Caco-2 (cell line): ENCODE measurements at regions of chr17 and their contacts with region 1.

Region 1: GRCh38 chr17:34584805-34585416 is 5.5 kb downstream of the TMEM132E start:
- DNase-seq: peak in 1 of 2 experiments; percentile 22
- H3K4me3 ChIP-seq: no peak overlapping the region
- H3K4me3 Mint-ChIP-seq: no peak overlapping the region
- H3K27ac Mint-ChIP-seq: no peak overlapping the region
- H3K4me1 ChIP-seq: peaks cover 6% of the 10 kb centered on the region; the same call in 1 of the 2 replicates
- H3K4me1 Mint-ChIP-seq: peaks cover 5% of the 10 kb centered on the region
- H3K27me3 ChIP-seq: peaks cover 2% of the 10 kb centered on the region; the same call in 1 of the 2 replicates
- H3K27me3 Mint-ChIP-seq: peaks cover 33% of the 10 kb centered on the region
- CTCF ChIP-seq: peak in 1 of 2 experiments; percentile 31

Region 2: GRCh38 chr17:34542700-34543336 is 42.1 kb before region 1 on chr17:
- CTCF ChIA-PET with region 1: no interaction called
- POLR2A ChIA-PET with region 1: no interaction called
- intact Hi-C with region 1: no loop called
- DNase-seq: peak in 1 of 2 experiments; percentile 62
- H3K4me3 ChIP-seq: no peak overlapping the region
- H3K4me3 Mint-ChIP-seq: no peak overlapping the region
- H3K27ac Mint-ChIP-seq: no peak overlapping the region
- H3K4me1 ChIP-seq: no peaks in the 10 kb centered on the region
- H3K4me1 Mint-ChIP-seq: no peaks in the 10 kb centered on the region
- H3K27me3 ChIP-seq: no peaks in the 10 kb centered on the region; the same call in none of the 2 replicates
- H3K27me3 Mint-ChIP-seq: peaks cover 18% of the 10 kb centered on the region
- CTCF ChIP-seq: peak; percentile 79 to 88

Region 3: DNA sequence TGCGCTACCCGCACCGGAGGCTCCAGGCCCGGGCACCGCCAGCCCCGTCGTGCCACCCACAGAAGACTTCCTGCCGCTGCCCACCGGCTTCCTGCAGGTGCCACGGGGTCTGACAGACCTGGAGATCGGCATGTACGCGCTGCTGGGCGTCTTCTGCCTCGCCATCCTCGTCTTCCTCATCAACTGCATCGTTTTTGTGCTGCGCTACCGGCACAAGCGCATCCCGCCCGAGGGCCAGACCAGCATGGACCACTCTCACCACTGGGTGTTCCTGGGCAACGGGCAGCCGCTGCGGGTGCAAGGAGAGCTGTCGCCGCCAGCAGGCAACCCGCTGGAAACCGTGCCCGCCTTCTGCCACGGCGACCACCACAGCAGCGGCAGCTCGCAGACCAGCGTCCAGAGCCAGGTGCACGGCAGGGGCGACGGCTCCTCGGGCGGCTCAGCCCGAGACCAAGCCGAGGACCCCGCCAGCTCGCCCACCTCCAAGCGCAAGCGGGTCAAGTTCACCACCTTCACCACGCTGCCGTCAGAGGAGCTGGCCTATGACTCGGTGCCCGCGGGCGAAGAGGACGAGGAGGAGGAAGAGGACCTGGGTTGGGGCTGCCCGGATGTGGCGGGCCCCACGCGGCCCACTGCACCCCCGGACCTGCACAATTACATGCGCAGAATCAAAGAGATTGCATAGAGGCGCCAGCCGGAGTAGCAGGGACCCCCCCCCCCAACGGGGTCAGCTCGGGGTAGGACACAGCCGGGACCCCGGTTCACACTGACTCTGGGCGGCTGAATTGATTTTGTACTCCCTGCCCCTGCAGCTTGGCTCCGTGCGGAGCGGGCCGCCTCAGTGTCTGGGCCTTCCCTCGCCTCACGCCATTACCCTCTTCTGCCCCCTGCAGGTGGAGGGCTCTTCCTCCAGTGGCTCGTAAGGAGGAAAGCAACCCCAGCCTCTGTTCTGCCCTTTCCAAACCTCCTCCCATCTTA is 52.9 kb after region 1 on chr17:
- CTCF ChIA-PET with region 1: interaction called, 10 read pairs
- POLR2A ChIA-PET with region 1: no interaction called
- intact Hi-C with region 1: no loop called
- DNase-seq: peak; percentile 70 to 84
- H3K4me3 ChIP-seq: no peak overlapping the region
- H3K4me3 Mint-ChIP-seq: no peak overlapping the region
- H3K27ac Mint-ChIP-seq: no peak overlapping the region
- H3K4me1 ChIP-seq: peaks cover 7% of the 10 kb centered on the region; the same call in 1 of the 2 replicates
- H3K4me1 Mint-ChIP-seq: peaks cover 13% of the 10 kb centered on the region
- H3K27me3 ChIP-seq: no peaks in the 10 kb centered on the region; the same call in 1 of the 2 replicates
- H3K27me3 Mint-ChIP-seq: peaks cover 24% of the 10 kb centered on the region
- CTCF ChIP-seq: peak; percentile 84 to 94